PC-9 (cell line): ENCODE measurements at regions of chr3 and their contacts with region 1.

Region 1: GRCh38 chr3:169772897-169773828 is at the start of gene MYNN:
- DNase-seq: peak; percentile 84 to 91
- H3K4me3 ChIP-seq: peak within 1 kb of the TSS; percentile 84
- H3K27ac ChIP-seq: peak within 1 kb of the TSS; percentile 92
- H3K4me1 ChIP-seq: peaks cover 13% of the 10 kb centered on the region
- H3K27me3 ChIP-seq: no peaks in the 10 kb centered on the region
- CTCF ChIP-seq: no peak; the same call in 1 of the 2 replicates
- total RNA-seq, gene MYNN: 13.7 and 18.2 TPM in 2 replicates

Region 2: DNA sequence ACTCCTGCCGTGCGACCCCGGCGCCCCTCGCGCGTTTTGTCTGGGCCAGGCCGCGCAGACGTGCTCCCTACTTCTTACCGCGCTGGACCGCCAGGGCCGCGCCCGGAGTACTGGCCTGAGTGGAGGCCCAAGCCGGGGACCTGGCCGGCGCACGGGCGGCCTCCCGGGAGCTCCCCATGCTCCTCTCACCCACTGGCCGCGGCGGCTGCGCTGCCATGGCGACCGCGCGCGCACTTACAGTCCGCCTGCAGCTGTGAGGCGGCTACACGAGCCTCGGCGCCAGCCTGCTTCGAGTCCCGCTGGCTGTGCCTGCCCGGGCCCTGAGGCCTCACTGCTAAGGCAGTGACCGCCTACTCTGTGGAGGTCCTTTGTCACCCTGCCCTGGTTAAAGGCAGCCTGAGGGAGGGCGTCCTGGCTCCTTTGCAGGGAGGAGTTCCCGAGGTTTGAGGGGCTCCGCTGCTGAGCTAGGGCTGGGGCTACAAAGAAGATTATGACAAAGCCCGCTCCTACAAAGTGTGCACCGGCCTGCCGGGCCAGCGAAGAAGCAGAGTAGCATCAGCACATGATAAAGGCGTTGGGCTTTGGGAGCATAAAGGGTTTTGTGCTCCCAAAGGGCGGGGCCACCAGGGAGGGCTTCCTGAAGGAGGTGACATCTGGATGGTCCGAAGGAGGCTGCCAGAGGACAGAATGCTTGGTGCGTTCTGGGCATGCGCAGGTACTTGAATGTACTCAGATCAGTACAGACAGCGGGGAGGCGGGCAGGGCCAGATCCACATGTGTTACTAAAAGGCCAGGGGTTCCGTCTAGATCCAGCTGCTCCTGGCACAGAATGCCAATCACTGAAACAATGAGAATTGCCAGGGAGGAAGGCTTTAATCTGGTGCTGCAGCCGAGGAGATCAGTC is 39.4 kb after region 1 on chr3 and contains the starts of genes LRRC34 and LRRIQ4:
- CTCF ChIA-PET with region 1: no interaction called
- POLR2A ChIA-PET with region 1: no interaction called
- intact Hi-C with region 1: loop called (anchors 2 kb)
- DNase-seq: peak; percentile 57 to 74
- H3K4me3 ChIP-seq: peak within 1 kb of the TSS; percentile 61
- H3K27ac ChIP-seq: no peak within 1 kb of the TSS
- H3K4me1 ChIP-seq: peaks cover 16% of the 10 kb centered on the region
- H3K27me3 ChIP-seq: no peaks in the 10 kb centered on the region
- CTCF ChIP-seq: 0 out of 2 replicates have a peak, but pooled peaks have one; percentile 6
- total RNA-seq, gene LRRC34: 9.6 and 10.3 TPM in 2 replicates
- total RNA-seq, gene LRRIQ4: 1.3 TPM in 2 replicates

Region 3: GRCh38 chr3:170203457-170203856 is 430.3 kb after region 1 on chr3:
- CTCF ChIA-PET with region 1: no interaction called
- POLR2A ChIA-PET with region 1: interaction called, 12 read pairs
- intact Hi-C with region 1: no loop called
- DNase-seq: no peak
- H3K4me3 ChIP-seq: no peak overlapping the region
- H3K27ac ChIP-seq: no peak overlapping the region
- H3K4me1 ChIP-seq: no peaks in the 10 kb centered on the region
- H3K27me3 ChIP-seq: no peaks in the 10 kb centered on the region
- CTCF ChIP-seq: no peak

Region 4: DNA sequence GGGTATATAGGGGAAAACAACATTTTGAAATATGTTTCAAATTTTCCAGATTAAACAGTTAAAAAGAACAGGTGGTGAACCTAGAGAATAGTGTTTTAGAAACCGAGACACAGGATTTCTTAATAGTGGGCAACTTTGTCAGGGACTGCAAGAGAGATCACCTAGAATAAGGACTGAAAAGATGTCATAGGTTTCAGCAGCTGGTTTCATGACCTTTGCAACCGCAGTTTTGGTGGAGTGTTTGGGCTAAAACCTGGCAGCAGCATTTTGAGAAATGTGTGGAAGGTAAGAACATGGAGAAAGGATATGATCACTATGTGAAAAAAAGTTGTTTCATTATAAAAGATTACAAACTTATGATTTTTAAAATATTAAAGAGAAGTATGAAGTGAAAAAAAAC is 484.0 kb after region 1 on chr3:
- CTCF ChIA-PET with region 1: no interaction called
- POLR2A ChIA-PET with region 1: interaction called, 15 read pairs
- intact Hi-C with region 1: no loop called
- DNase-seq: no peak
- H3K4me3 ChIP-seq: no peak overlapping the region
- H3K27ac ChIP-seq: no peak overlapping the region
- H3K4me1 ChIP-seq: peaks cover 25% of the 10 kb centered on the region
- H3K27me3 ChIP-seq: no peaks in the 10 kb centered on the region
- CTCF ChIP-seq: no peak

Region 5: DNA sequence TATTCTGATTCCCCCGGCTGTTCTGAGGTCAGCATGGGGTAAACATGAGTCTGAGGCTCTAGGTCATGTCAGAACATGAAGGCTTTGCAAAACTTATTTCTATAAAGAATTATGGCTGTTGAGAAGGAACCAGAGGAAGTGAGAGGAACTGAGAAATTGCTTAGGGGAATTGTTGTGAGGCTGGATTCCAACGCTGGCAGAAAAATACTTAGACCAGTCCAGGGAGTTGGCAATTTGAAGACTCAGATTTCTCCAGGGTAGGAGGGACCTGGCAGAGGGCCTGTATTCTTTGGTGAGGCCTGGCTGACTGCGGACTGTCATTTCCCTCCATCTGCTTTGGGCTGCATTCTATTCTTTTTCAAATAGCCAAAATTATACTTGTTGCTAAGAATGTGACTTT is 1881.6 kb after region 1 on chr3:
- CTCF ChIA-PET with region 1: interaction called, 11 read pairs
- POLR2A ChIA-PET with region 1: no interaction called
- intact Hi-C with region 1: no loop called
- DNase-seq: peak in 1 of 2 experiments; percentile 6
- H3K4me3 ChIP-seq: no peak overlapping the region
- H3K27ac ChIP-seq: no peak overlapping the region
- H3K4me1 ChIP-seq: no peaks in the 10 kb centered on the region
- H3K27me3 ChIP-seq: no peaks in the 10 kb centered on the region
- CTCF ChIP-seq: no peak